Transverse colon (tissue), 4 donors: ENCODE measurements at regions of chr15 and their contacts with region 1.

Region 1: GRCh38 chr15:70097337-70098169 is at the start of gene TLE3:
- DNase-seq: peak; percentile 99
- H3K4me3 ChIP-seq: peak within 1 kb of the TSS; percentile 86 to 94 (median 88)
- H3K27ac ChIP-seq: peak within 1 kb of the TSS; percentile 95 to 97 (median 96)
- H3K4me1 ChIP-seq: peaks cover 27 to 66% (median 62%) of the 10 kb centered on the region in 4 donors
- H3K27me3 ChIP-seq: no peaks in the 10 kb centered on the region
- CTCF ChIP-seq: peak in 4 of 5 experiments; percentile 13 to 42 (median 38)
- EP300 ChIP-seq: no peak
- POLR2A ChIP-seq: peak; percentile 99
- total RNA-seq, gene TLE3: 49.8 to 223 (median 114) TPM

Region 2: DNA sequence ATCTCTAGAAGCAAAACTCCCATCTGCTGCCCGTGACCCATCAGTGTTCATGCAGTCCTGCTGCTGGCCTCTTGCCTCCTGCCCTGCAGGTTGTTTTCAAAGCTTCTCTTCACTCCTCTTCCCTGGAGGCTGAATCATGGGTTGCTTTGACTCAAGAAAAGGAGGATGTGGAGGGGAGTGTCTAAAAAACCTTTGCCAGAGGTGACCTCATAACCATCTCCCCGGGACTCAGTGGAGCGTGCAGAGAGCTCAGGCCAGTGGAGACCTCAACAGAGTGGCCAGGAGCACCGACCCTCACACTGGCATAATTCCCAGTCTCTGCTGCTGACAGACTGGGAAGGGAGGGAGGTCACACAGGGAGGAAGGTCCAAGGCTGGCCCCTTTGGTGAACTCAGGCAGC is 1604.7 kb before region 1 on chr15:
- in situ Hi-C with region 1: no loop called
- intact Hi-C with region 1: no loop called
- DNase-seq: no peak
- H3K4me3 ChIP-seq: no peak overlapping the region
- H3K27ac ChIP-seq: no peak overlapping the region
- H3K4me1 ChIP-seq: no peaks in the 10 kb centered on the region
- H3K27me3 ChIP-seq: peaks cover 4% of the 10 kb centered on the region
- CTCF ChIP-seq: no peak
- EP300 ChIP-seq: no peak
- POLR2A ChIP-seq: no peak

Region 3: GRCh38 chr15:70245932-70246331 is 148.4 kb after region 1 on chr15:
- in situ Hi-C with region 1: no loop called
- intact Hi-C with region 1: no loop called
- DNase-seq: peak; percentile 38
- H3K4me3 ChIP-seq: no peak overlapping the region
- H3K27ac ChIP-seq: no peak overlapping the region
- H3K4me1 ChIP-seq: peaks cover 0 to 14% (median 0%) of the 10 kb centered on the region in 4 donors
- H3K27me3 ChIP-seq: no peaks in the 10 kb centered on the region
- CTCF ChIP-seq: no peak
- EP300 ChIP-seq: no peak
- POLR2A ChIP-seq: no peak

Region 4: GRCh38 chr15:70264014-70264582 is 166.5 kb after region 1 on chr15:
- in situ Hi-C with region 1: no loop called
- intact Hi-C with region 1: loop called (anchors 10 kb)
- DNase-seq: no peak
- H3K4me3 ChIP-seq: no peak overlapping the region
- H3K27ac ChIP-seq: peak overlapping the region in 3 of 4 donors; percentile 3 to 37 (median 8)
- H3K4me1 ChIP-seq: peaks cover 2 to 45% (median 16%) of the 10 kb centered on the region in 4 donors
- H3K27me3 ChIP-seq: no peaks in the 10 kb centered on the region
- CTCF ChIP-seq: no peak
- EP300 ChIP-seq: no peak
- POLR2A ChIP-seq: no peak

Region 5: GRCh38 chr15:70323111-70323851 is 225.7 kb after region 1 on chr15:
- in situ Hi-C with region 1: no loop called
- intact Hi-C with region 1: loop called (anchors 5 kb)
- DNase-seq: peak; percentile 51
- H3K4me3 ChIP-seq: no peak overlapping the region
- H3K27ac ChIP-seq: peak overlapping the region; percentile 65 to 88 (median 75)
- H3K4me1 ChIP-seq: peaks cover 33 to 68% (median 51%) of the 10 kb centered on the region in 4 donors
- H3K27me3 ChIP-seq: no peaks in the 10 kb centered on the region
- CTCF ChIP-seq: peak in 1 of 5 experiments; percentile 11
- EP300 ChIP-seq: no peak
- POLR2A ChIP-seq: no peak